ENCODE measurements at regions of chr12 and their contacts with region 1.

Region 1: GRCh38 chr12:116164250-116165035 is 113.0 kb downstream of the MED13L start:
- DNase-seq: peak; percentile 27 to 76 (median 34)
- ATAC-seq: peak; percentile 78
- H3K4me3 ChIP-seq: no peak overlapping the region
- H3K27ac ChIP-seq: peak overlapping the region; percentile 60
- H3K4me1 ChIP-seq: peaks cover 15 to 44% of the 10 kb centered on the region in 2 experiments
- H3K27me3 ChIP-seq: no peaks in the 10 kb centered on the region
- CTCF ChIP-seq: no peak
- EP300 ChIP-seq: peak; percentile 27; the same call in 1 of the 2 replicates
- POLR2A ChIP-seq: no peak
- RAD21 ChIP-seq: no peak

Region 2: GRCh38 chr12:116177017-116177416 is 12.6 kb after region 1 on chr12:
- CTCF ChIA-PET with region 1: no interaction called
- POLR2A ChIA-PET with region 1: interaction called, 15 read pairs
- in situ Hi-C with region 1: no loop called
- intact Hi-C with region 1: no loop called
- DNase-seq: peak; percentile 28 to 70 (median 46)
- ATAC-seq: peak; percentile 60
- H3K4me3 ChIP-seq: no peak overlapping the region
- H3K27ac ChIP-seq: peak overlapping the region; percentile 26; the same call in 2 of the 3 replicates
- H3K4me1 ChIP-seq: peaks cover 9 to 40% of the 10 kb centered on the region in 2 experiments; a peak in 4 of 5 replicates
- H3K27me3 ChIP-seq: no peaks in the 10 kb centered on the region
- CTCF ChIP-seq: no peak
- EP300 ChIP-seq: peak; percentile 53; the same call in 1 of the 2 replicates
- POLR2A ChIP-seq: no peak
- RAD21 ChIP-seq: no peak